Tibial artery (tissue), 4 donors: ENCODE measurements at regions of chr10 and their contacts with region 1.

Region 1: GRCh38 chr10:5466418-5467154 is 32.8 kb downstream of the CALML5 start:
- DNase-seq: no peak
- H3K4me3 ChIP-seq: no peak overlapping the region
- H3K27ac ChIP-seq: peak overlapping the region in 1 of 2 donors; percentile 18
- H3K4me1 ChIP-seq: peaks cover 0 to 26% (median 11%) of the 10 kb centered on the region in 4 donors
- H3K27me3 ChIP-seq: no peaks in the 10 kb centered on the region
- CTCF ChIP-seq: no peak

Region 2: GRCh38 chr10:5518138-5518537 is 51.6 kb after region 1 on chr10:
- intact Hi-C with region 1: loop called (anchors 5 kb)
- DNase-seq: peak in 1 of 2 donors; percentile 9
- H3K4me3 ChIP-seq: no peak overlapping the region
- H3K27ac ChIP-seq: no peak overlapping the region
- H3K4me1 ChIP-seq: no peaks in the 10 kb centered on the region
- H3K27me3 ChIP-seq: no peaks in the 10 kb centered on the region
- CTCF ChIP-seq: no peak

Region 3: DNA sequence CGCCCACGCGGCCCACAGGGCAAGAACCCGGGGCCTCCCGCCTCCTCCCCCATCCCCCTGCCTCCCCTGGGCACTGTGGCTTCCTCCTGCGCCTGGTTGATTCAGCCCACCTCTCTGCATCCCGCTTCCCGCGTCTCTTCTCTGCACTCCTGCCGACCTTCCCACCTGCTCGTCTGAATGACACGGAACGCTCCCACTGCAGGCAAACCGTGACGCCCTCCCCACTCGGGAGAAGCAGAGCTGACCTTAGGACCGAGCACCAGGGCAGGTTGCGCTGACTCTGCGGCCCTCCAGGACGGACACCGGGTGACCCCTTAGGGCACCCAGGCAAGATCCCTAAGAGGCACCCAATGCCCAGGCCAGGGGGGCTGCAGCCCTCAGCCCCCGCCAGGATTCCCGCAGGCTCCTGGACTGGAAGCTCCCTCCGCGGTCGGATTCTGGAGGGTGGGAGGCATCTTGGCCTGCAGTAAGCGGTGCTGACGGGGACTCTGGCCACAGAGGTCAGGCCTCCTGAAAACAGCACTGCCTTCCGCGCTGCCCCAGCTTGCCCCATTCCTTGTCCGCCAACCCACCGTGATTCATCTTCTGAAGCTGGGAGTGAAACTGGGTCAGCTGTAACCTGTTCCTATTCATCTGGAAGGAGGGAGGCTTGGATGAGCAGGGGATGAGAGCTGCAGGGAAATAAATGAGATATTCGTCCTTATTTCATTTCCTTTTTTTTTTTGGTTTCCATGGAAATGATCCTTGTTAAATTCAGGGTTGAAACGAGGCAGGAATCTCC is 59.2 kb after region 1 on chr10:
- intact Hi-C with region 1: loop called (anchors 5 kb)
- DNase-seq: peak; percentile 18 to 48
- H3K4me3 ChIP-seq: no peak overlapping the region
- H3K27ac ChIP-seq: no peak overlapping the region
- H3K4me1 ChIP-seq: peaks cover 0 to 31% (median 17%) of the 10 kb centered on the region in 4 donors
- H3K27me3 ChIP-seq: no peaks in the 10 kb centered on the region
- CTCF ChIP-seq: no peak

Region 4: GRCh38 chr10:5861269-5862031 is 394.9 kb after region 1 on chr10:
- intact Hi-C with region 1: no loop called
- DNase-seq: no peak
- H3K4me3 ChIP-seq: no peak overlapping the region
- H3K27ac ChIP-seq: no peak overlapping the region
- H3K4me1 ChIP-seq: no peaks in the 10 kb centered on the region
- H3K27me3 ChIP-seq: no peaks in the 10 kb centered on the region
- CTCF ChIP-seq: no peak